GM10248 (cell line): ENCODE measurements at regions of chr2 and their contacts with region 1.

Region 1: DNA sequence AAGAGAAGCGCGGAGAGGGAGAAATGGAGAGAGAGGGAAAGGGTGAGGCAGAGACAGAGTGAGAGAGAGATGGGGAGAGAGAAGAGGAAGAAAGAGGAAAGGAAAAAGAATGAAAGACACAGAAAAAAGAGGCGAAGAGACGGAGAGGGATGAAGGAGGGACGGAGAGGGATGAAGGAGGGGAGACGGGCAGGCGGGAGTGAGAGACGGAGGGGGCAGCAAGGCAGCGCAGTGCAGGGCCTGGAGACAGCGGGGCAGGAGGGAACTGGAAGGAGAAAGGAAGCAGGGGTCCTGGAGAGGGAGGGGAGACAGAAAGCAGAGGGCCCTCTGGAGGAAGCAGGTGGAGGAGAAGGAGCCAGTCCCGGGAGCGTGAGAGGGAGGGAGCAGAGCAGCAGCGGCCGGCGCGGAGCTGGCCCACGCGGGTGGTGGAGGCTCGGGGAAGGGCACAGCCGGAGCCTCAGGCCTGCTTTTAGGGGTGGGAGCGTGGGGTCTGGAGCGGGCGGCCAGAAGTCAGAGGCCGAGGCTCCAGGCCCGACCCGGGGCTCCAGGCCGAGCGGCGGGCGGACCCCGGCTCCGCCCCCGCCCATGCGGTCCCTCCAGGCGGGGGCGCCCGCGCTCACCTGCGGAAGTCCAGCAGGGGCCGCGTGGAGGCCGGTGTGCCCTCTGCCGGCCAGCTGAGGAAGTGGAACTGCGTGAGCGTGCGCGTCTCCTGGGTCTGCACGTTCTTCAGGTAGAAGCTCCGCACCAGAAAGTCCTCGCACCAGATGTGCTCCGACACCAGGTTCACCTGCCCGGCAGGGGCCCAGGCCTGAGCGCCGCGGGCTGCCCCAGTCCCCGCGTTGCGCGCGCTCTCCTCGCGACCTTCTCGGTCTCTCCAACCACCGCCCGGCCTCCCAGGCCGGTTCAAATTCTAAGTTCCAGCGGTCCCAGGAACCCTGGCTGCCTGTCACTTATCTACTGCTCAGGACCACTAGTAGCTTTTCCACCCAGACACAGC is 14.5 kb downstream of the PTPRN start:
- DNase-seq: peak; percentile 98
- CTCF ChIP-seq: peak; percentile 99

Region 2: GRCh38 chr2:219177552-219178376 is 116.9 kb before region 1 on chr2 and contains the start of gene RETREG2:
- CTCF ChIA-PET with region 1: interaction called, 164 read pairs
- POLR2A ChIA-PET with region 1: interaction called, 3 read pairs
- DNase-seq: peak; percentile 98
- CTCF ChIP-seq: peak; percentile 71

Region 3: GRCh38 chr2:219206442-219207253 is 88.0 kb before region 1 on chr2 and contains the start of gene ZFAND2B:
- CTCF ChIA-PET with region 1: interaction called, 10 read pairs
- POLR2A ChIA-PET with region 1: no interaction called
- DNase-seq: peak; percentile 99
- CTCF ChIP-seq: no peak

Region 4: DNA sequence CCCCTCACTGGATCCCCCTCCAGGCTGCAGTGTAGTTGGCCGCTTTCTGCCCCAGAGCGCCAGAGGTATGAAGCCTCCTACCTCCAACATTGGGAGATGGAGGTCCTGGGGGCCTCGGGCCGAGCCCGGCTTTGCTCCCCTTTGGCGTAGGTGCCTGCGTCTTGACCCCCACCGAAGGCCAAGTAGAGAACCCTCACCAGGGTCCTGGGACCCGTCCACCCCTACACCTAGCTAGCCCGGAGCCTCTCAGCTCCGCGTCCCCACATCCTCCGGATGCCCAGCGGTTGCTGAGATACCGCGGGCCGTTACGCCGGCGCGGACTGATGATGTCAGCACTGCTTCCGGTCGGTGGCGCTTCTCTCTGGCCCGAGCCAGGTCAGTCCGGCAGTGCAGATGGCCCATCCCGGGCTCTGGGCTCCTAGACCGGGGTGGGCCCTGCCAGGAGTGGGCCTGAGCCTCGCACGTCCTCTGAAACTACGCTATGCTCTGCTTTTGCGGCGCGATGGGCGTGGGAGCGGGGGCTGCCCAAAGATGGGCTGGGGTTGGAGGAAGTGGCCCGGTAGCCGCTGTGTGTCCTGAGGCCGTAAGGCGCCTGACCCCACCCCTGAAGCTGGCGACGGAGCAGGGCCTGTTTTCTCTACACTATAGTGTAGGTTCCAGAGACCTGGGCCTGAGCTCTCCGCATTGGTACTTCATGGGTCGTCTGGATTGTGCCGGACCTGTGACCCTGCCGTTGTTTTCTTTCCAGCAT is 49.3 kb before region 1 on chr2 and contains the starts of genes GLB1L and STK16:
- CTCF ChIA-PET with region 1: interaction called, 116 read pairs
- POLR2A ChIA-PET with region 1: no interaction called
- DNase-seq: peak; percentile 96
- CTCF ChIP-seq: no peak

Region 5: GRCh38 chr2:219261024-219261855 is 33.4 kb before region 1 on chr2:
- CTCF ChIA-PET with region 1: interaction called, 116 read pairs
- POLR2A ChIA-PET with region 1: no interaction called
- DNase-seq: no peak
- CTCF ChIP-seq: no peak

Region 6: DNA sequence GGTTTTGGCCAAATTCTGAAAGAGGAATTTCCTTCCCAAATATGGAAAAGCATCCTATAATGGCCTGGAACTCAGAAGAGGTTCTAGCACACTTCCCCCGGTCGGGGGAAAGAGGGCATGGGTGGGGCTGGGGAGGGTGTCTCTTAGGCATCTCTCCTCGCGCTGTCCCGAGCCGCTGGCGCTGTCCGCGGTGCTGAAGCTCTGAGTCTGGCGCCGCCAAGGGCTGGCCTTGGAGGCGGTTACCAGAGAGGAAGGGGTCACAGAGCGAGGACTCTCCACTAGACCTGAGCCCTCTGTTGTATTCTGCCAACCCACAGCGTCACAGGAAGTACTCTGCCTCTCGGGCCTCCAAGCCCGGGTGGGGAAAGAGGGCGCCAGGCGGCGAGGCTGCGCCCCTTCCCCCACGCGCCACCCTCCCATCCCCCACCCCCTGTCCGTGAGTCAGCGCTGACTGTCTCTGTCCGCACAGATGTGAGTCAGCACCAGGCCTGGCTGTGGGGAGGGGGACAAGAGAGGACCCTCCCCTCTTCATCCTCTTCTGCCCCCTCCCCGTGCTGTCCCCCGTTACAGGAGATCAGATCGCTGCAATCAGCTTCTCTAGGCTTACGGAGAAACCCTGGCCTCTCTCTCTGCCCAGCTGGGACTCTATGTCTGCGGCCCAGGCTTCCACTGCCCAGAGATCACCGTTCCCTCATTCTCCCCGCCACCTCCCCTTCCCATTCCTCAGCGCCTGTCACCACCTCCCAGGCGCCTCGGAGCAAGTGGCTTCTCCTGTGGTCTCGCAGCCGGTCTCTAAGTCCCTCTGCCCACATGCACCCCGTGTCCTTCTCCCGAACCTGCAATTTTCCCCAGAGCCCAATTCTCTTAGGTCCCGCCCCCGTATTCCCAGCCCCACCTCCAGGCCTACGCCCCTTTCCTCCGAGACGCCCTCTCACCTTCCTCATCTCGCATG is 13.8 kb after region 1 on chr2:
- CTCF ChIA-PET with region 1: interaction called, 28 read pairs
- POLR2A ChIA-PET with region 1: no interaction called
- DNase-seq: peak; percentile 84
- CTCF ChIP-seq: no peak